Astrocyte of the cerebellum (primary cell): ENCODE measurements at regions of chr2 and their contacts with region 1.

Region 1: DNA sequence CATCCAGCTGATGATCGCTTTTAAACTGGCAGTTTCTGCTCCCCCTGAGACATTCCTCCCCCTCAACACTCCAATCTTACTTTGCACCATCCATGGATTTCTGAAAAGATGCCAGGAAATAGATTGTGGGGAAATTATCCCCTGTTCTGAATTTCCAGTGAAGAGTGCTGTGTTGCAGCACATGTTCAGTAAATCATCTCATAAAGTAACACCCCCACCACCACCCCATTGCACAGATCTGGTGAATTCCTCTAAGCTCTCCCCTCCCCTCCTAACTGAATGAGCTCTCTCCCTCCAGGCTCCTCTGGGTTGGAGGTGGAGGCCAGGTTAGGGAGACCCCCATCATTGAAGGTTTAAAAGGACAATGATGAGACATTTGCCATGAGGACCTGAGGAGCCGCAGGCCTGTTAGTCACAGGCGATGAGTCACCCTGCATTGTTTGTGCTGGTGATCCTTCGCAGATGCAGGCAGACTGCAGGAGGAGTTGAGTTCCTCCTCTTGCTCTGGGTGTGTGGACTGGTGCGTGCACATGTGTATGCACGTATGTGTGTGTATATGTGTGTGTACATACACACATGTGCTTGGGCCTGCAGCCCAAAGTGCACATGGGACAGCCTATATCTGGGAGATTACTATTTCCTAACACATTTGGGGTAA is 42.1 kb downstream of the MCFD2 start:
- DNase-seq: peak; percentile 83
- H3K4me3 ChIP-seq: no peak overlapping the region
- CTCF ChIP-seq: no peak

Region 2: GRCh38 chr2:46650556-46651001 is 222.9 kb before region 1 on chr2:
- in situ Hi-C with region 1: loop called (anchors 5 kb)
- DNase-seq: peak; percentile 86
- H3K4me3 ChIP-seq: no peak overlapping the region
- CTCF ChIP-seq: peak; percentile 95